ENCODE measurements at regions of chr17 and their contacts with region 1.

Region 1: DNA sequence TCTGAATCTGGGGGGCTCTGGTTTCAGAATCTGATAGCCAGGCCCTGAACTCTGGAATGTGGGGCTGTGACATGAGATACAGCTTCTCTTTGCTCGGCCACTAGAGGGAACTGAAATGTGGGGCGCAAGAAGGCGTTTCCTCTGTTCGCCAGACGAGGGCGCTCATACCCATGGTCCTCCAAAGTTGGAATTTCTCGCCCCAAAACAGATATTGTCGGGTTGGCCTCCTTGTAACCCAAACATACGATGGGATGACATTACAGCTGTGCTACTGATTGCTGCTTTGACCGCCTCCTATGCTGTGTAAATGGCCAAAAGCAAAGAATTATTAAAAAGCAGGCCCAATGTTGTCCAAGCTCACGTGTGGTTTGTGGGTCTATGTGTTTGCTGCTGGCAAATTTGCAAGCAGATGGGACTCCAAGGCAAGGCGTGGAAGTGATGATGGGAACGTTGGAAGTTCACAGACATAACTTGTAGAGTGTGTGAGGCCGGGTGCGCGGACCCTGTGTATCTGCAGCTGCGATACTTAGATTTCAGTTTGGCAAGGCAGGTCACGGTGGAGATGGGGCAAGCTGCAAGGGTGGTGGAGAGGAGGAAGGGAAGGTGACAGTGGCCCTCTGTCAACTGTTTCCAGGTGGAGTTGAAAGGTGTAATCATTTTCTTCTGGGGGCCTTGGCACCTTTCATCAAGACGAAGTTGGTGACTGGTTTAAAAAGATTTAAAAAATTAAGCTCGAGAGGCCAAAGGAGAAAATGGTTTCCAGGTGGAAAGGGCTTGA is 13.0 kb upstream of the MSI2 start:
- DNase-seq: peak; percentile 74
- H3K4me3 ChIP-seq: peak overlapping the region in 1 of 2 experiments; percentile 40; a peak in 1 of 4 replicates
- H3K27ac ChIP-seq: no peak overlapping the region; a peak in 1 of 4 replicates
- H3K4me1 ChIP-seq: peaks cover 0 to 9% of the 10 kb centered on the region in 2 experiments; a peak in 1 of 4 replicates
- H3K27me3 ChIP-seq: no peaks in the 10 kb centered on the region
- CTCF ChIP-seq: peak; percentile 100
- EP300 ChIP-seq: no peak; a peak in 1 of 4 replicates
- RAD21 ChIP-seq: peak; percentile 89

Region 2: DNA sequence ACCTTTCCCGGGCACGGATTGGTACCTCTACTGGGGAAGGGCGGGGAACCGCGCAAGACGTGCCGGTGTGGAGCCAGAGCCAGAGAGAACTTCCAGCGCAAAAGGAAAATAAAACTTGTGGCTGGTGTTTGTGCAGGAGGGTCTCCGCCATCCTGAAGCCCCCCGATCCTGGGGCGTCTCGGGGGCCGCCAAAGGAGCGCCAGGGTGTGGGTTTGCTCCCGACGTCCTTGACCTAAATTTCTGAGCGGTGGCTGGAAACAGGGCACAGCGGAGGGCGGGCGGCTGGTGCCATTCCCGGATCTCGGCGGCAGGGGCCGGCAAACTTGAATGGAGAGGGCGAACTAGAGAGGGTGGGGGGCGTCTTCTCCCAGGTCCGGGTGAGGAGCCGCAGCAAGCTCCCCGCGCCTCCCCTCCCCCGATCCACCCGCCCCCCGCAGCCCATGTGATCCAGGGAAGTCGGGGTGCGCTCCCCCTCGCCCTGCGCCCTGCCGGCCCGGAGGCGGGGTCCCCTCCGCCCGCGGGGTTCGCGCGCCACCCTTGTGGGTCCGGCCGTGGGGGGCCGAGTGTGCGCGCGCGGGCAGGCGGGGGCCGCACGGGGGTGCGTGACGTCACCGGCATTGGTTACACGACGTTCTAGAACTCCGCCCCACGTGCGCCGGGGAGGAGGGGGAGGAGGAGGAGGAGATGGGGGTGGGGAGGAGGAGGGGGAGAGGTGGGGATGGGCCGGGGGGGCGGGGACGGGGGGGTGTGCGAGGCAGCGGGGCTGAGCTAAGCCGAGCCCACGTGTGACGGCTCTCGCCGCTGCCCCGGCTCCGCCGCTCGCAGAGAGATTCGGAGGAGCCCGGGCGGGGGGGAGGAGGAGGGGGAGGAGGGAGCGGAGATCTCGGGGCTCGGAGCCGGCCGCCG is 12.7 kb after region 1 on chr17 and contains the start of gene MSI2:
- CTCF ChIA-PET with region 1: interaction called, 30 read pairs
- POLR2A ChIA-PET with region 1: no interaction called
- DNase-seq: peak; percentile 97
- H3K4me3 ChIP-seq: peak within 1 kb of the TSS; percentile 81 to 88
- H3K27ac ChIP-seq: peak within 1 kb of the TSS; percentile 60 to 93
- H3K4me1 ChIP-seq: peaks cover 10 to 28% of the 10 kb centered on the region in 2 experiments; a peak in 3 of 4 replicates
- H3K27me3 ChIP-seq: no peaks in the 10 kb centered on the region
- CTCF ChIP-seq: peak; percentile 22
- EP300 ChIP-seq: no peak; a peak in 1 of 4 replicates
- RAD21 ChIP-seq: no peak
- polyA plus RNA-seq, gene MSI2: 24.1 and 25.5 TPM in 2 replicates

Region 3: GRCh38 chr17:57365420-57365819 is 122.1 kb after region 1 on chr17:
- CTCF ChIA-PET with region 1: interaction called, 16 read pairs
- POLR2A ChIA-PET with region 1: interaction called, 6 read pairs
- DNase-seq: no peak
- H3K4me3 ChIP-seq: no peak overlapping the region
- H3K27ac ChIP-seq: peak overlapping the region in 1 of 2 experiments; percentile 92; a peak in 2 of 4 replicates
- H3K4me1 ChIP-seq: peaks cover 0 to 56% of the 10 kb centered on the region in 2 experiments; a peak in 3 of 4 replicates
- H3K27me3 ChIP-seq: no peaks in the 10 kb centered on the region
- CTCF ChIP-seq: no peak
- EP300 ChIP-seq: no peak
- RAD21 ChIP-seq: no peak

Region 4: GRCh38 chr17:57440522-57441485 is 197.4 kb after region 1 on chr17:
- CTCF ChIA-PET with region 1: interaction called, 19 read pairs
- POLR2A ChIA-PET with region 1: no interaction called
- DNase-seq: peak; percentile 82
- H3K4me3 ChIP-seq: no peak overlapping the region
- H3K27ac ChIP-seq: peak overlapping the region; percentile 70 to 96
- H3K4me1 ChIP-seq: peaks cover 47 to 86% of the 10 kb centered on the region in 2 experiments
- H3K27me3 ChIP-seq: no peaks in the 10 kb centered on the region
- CTCF ChIP-seq: peak; percentile 53
- EP300 ChIP-seq: peak in 1 of 2 experiments; percentile 60; a peak in 1 of 4 replicates
- RAD21 ChIP-seq: peak; percentile 68

Region 5: GRCh38 chr17:57535249-57535966 is 292.0 kb after region 1 on chr17:
- CTCF ChIA-PET with region 1: interaction called, 13 read pairs
- POLR2A ChIA-PET with region 1: no interaction called
- DNase-seq: peak; percentile 71
- H3K4me3 ChIP-seq: no peak overlapping the region
- H3K27ac ChIP-seq: peak overlapping the region in 1 of 2 experiments; percentile 100; a peak in 2 of 4 replicates
- H3K4me1 ChIP-seq: peaks cover 34 to 96% of the 10 kb centered on the region in 2 experiments
- H3K27me3 ChIP-seq: no peaks in the 10 kb centered on the region
- CTCF ChIP-seq: no peak
- EP300 ChIP-seq: peak in 1 of 2 experiments; percentile 88; a peak in 2 of 4 replicates
- RAD21 ChIP-seq: 0 out of 2 replicates have a peak, but pooled peaks have one; percentile 23

Region 6: GRCh38 chr17:57552114-57552624 is 308.8 kb after region 1 on chr17:
- CTCF ChIA-PET with region 1: interaction called, 12 read pairs
- POLR2A ChIA-PET with region 1: no interaction called
- DNase-seq: peak; percentile 84
- H3K4me3 ChIP-seq: no peak overlapping the region
- H3K27ac ChIP-seq: peak overlapping the region in 1 of 2 experiments; percentile 99; a peak in 2 of 4 replicates
- H3K4me1 ChIP-seq: peaks cover 6 to 86% of the 10 kb centered on the region in 2 experiments; a peak in 2 of 4 replicates
- H3K27me3 ChIP-seq: no peaks in the 10 kb centered on the region
- CTCF ChIP-seq: peak; percentile 52
- EP300 ChIP-seq: peak in 1 of 2 experiments; percentile 61; a peak in 1 of 4 replicates
- RAD21 ChIP-seq: peak; percentile 65